ENCODE measurements at regions of chr17 and their contacts with region 1.

Region 1: DNA sequence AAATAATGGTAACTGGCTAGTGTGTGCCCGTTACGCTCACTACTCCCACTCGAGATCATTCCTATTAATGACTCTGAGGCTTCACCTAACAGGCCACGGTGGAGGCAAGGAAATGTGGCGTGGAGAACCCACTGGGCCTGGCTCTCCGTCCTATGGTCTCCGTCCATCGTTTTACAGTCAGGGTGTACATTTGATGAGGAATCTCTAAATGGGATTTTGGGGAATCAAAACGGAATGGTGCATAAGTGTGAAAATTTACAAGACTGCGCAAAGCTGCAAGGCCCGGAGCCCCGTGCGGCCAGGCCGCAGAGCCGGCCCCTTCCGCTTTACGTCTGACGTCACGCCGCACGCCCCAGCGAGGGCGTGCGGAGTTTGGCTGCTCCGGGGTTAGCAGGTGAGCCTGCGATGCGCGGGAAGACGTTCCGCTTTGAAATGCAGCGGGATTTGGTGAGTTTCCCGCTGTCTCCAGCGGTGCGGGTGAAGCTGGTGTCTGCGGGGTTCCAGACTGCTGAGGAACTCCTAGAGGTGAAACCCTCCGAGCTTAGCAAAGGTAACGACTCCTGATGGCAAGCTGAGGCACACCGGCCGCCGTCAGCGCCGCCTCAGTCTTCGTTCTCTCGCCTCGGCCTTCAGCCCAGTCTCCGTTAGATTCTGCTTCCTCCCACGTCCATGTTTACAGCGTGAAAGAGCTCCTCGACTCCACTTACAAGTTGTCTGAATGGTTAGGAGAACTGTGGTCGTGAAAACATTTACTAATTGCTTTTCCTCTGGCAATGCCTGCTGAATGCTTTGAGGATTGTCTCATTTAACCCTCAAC is at the start of gene RAD51C:
- DNase-seq: peak; percentile 92
- H3K4me3 Mint-ChIP-seq: peak within 1 kb of the TSS; percentile 90
- H3K27ac Mint-ChIP-seq: peak within 1 kb of the TSS; percentile 88
- H3K4me1 Mint-ChIP-seq: peaks cover 40% of the 10 kb centered on the region
- H3K27me3 Mint-ChIP-seq: no peaks in the 10 kb centered on the region
- total RNA-seq, gene RAD51C: 55.2 to 59.6 TPM

Region 2: GRCh38 chr17:58643140-58643539 is 49.3 kb before region 1 on chr17:
- CTCF ChIA-PET with region 1: no interaction called
- POLR2A ChIA-PET with region 1: interaction called, 10 read pairs
- DNase-seq: no peak
- H3K4me3 Mint-ChIP-seq: no peak overlapping the region
- H3K27ac Mint-ChIP-seq: no peak overlapping the region
- H3K4me1 Mint-ChIP-seq: peaks cover 19% of the 10 kb centered on the region
- H3K27me3 Mint-ChIP-seq: no peaks in the 10 kb centered on the region

Region 3: GRCh38 chr17:58658804-58659713 is 33.4 kb before region 1 on chr17:
- CTCF ChIA-PET with region 1: no interaction called
- POLR2A ChIA-PET with region 1: interaction called, 53 read pairs
- DNase-seq: peak; percentile 83
- H3K4me3 Mint-ChIP-seq: peak overlapping the region; percentile 70
- H3K27ac Mint-ChIP-seq: peak overlapping the region; percentile 94
- H3K4me1 Mint-ChIP-seq: peaks cover 26% of the 10 kb centered on the region
- H3K27me3 Mint-ChIP-seq: peaks cover 13% of the 10 kb centered on the region

Region 4: DNA sequence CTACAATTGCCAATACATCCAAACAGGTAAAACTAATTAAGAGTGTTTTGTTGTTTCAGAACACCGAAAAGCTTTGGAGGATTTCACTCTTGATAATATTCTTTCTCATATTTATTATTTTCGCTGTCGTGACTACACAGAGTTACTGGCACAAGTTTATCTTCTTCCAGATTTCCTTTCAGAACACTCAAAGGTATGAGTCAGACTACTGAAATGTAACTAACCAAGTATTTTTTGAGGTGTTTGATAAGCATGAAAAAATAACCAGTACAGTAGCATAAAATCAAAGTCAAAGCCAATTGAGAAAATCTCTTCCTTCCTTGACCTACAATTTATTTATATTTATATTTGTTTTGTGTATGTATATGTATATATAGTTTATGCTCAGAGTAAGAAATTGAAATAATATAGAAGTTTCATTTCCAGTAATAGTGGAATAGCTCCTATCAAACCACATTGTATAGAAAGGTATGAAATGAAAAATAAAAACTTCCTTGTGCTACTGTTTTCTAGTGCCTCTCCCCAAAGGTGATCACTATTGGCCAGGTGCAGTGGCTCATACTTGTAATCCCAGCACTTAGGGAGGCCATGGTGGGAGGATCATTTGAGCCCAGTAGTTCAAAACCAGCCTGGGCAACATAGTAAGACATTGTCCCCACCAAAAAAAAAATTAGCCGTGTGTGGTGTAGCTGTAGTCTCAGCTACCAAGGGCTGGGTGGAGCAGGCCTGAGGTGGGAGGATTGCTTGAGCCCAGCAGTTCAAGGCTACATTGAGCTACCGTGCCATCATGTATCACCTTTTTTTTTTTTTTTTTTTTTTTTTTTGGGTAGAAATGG is 10.9 kb after region 1 on chr17:
- CTCF ChIA-PET with region 1: interaction called, 4 read pairs
- POLR2A ChIA-PET with region 1: interaction called, 42 read pairs
- DNase-seq: no peak
- H3K4me3 Mint-ChIP-seq: no peak overlapping the region
- H3K27ac Mint-ChIP-seq: peak overlapping the region; percentile 61
- H3K4me1 Mint-ChIP-seq: peaks cover 52% of the 10 kb centered on the region
- H3K27me3 Mint-ChIP-seq: no peaks in the 10 kb centered on the region

Region 5: GRCh38 chr17:58710936-58711775 is 18.7 kb after region 1 on chr17:
- CTCF ChIA-PET with region 1: interaction called, 15 read pairs
- POLR2A ChIA-PET with region 1: interaction called, 15 read pairs
- DNase-seq: peak; percentile 23
- H3K4me3 Mint-ChIP-seq: no peak overlapping the region
- H3K27ac Mint-ChIP-seq: no peak overlapping the region
- H3K4me1 Mint-ChIP-seq: peaks cover 15% of the 10 kb centered on the region
- H3K27me3 Mint-ChIP-seq: no peaks in the 10 kb centered on the region

Region 6: DNA sequence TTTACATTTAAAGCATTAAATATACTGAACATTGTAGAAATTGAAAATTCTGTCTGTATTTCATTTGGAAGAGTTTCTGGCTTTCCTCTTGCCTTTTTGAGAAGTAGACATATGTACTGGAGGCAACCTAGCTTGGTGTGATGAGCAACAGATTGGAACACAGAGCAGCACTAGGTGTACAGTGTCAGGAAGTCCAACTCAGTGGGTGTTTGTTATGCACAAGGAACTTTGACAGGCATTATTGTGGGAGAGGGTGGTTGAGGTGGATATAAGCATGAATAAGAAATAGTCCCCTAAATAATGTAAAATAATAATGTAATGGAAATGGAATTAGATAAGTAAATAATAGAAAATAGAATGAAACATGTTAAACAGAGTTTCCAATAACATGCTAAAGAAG is 121.3 kb after region 1 on chr17:
- CTCF ChIA-PET with region 1: no interaction called
- POLR2A ChIA-PET with region 1: no interaction called
- DNase-seq: no peak
- H3K4me3 Mint-ChIP-seq: no peak overlapping the region
- H3K27ac Mint-ChIP-seq: no peak overlapping the region
- H3K4me1 Mint-ChIP-seq: no peaks in the 10 kb centered on the region
- H3K27me3 Mint-ChIP-seq: peaks cover 8% of the 10 kb centered on the region

Region 7: DNA sequence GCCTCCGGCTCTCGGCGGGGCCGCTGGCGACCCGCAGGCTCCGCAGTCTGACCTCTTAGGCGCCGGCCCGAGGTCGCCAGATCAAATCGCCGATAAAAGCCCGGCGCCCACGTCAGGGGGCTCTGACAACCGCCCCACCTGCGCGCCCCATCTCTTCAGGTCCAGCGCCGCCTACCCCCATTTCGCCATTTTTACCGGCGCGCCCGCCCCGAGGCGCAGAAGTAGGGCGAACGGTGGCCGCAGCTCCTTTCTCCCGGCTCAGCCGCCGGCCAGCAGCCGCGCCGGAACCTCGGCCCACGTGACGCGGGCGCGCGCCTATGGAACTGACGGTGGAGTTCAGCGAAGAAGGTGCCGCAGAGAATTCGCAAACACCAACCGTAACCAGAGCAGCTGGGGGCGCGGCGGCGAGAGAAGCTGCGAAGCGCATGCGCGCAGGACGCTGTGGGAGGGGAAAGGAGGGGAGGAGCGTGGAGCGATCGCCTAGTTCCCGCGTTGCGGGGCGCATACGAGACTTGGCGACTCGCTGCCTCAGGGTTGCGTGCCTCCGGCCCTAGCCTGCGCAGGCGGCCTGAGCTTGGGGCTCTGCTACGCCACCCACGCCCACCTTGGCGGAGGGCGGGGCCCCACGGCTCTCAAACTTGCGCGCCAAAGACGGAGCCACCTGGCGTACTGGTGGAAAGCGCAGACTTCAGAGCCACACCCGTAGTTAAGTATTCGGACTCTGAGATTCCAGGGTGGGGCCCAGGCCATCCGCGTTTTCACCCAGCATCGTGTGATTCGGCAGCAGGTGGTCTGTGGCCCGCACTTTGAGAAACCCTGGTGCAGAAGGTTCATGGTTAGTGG is 414.2 kb after region 1 on chr17 and contains the start of gene TRIM37:
- CTCF ChIA-PET with region 1: no interaction called
- POLR2A ChIA-PET with region 1: interaction called, 17 read pairs
- DNase-seq: peak; percentile 99
- H3K4me3 Mint-ChIP-seq: peak within 1 kb of the TSS; percentile 98
- H3K27ac Mint-ChIP-seq: peak within 1 kb of the TSS; percentile 91
- H3K4me1 Mint-ChIP-seq: peaks cover 61% of the 10 kb centered on the region
- H3K27me3 Mint-ChIP-seq: no peaks in the 10 kb centered on the region
- total RNA-seq, gene TRIM37: 23.7 to 24.5 TPM

Measured in activated CD4-positive, alpha-beta memory T cell treated with anti-CD3 and anti-CD28 coated beads, Interleukin-2, amount 10 ng/mL, durations not matched to agents 7 days and 5 days (primary cell).